K562 (cell line): ENCODE measurements at regions of chr7 and their contacts with region 1.

Region 1: DNA sequence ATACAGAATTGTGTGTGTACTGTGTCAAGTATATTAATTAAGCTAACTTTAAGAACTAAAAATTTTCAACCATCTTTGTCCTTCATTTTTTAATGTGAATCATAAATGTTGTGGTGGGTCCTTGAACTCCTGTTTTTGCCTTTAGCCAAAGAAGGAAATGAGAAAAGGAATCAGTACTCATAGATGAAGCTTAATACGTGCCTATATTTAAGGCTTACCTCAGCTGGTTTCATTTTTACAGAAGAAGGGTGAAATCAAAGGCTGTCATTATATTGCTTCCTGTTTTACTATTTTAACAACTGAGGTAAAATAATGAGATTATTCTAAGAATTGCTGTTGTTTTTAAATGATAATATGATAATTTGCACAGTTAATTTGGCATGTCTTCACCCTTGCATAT is 6.3 kb upstream of the SNX13 start:
- DNase-seq: no peak
- ATAC-seq: no peak
- H3K4me3 ChIP-seq: no peak overlapping the region
- H3K27ac ChIP-seq: no peak overlapping the region
- H3K4me1 ChIP-seq: no peaks in the 10 kb centered on the region
- H3K27me3 ChIP-seq: no peaks in the 10 kb centered on the region
- CTCF ChIP-seq: no peak
- EP300 ChIP-seq: no peak
- POLR2A ChIP-seq: no peak
- RAD21 ChIP-seq: no peak

Region 2: DNA sequence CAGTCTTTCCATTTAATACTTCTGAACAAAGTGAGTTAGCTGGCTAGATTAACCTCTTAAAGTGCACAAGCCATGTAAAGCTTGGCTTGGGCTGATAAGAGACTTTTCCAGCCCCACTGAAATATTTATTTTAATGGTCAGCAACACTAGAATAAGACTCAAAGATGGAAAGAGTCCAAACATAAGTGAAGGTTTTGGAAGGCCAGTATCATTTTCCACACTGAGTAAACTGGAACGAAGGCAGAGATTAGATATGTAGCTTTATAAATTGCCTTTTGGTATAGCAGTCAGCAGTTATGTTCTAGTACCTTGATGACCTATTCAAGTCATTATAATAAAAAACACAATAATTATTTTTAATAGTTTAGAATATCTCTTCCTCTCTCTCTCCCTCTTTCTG is 651.2 kb after region 1 on chr7:
- CTCF ChIA-PET with region 1: no interaction called
- POLR2A ChIA-PET with region 1: no interaction called
- in situ Hi-C with region 1: no loop called
- intact Hi-C with region 1: loop called (anchors 5 kb)
- DNase-seq: no peak
- ATAC-seq: no peak
- H3K4me3 ChIP-seq: no peak overlapping the region
- H3K27ac ChIP-seq: no peak overlapping the region
- H3K4me1 ChIP-seq: no peaks in the 10 kb centered on the region
- H3K27me3 ChIP-seq: no peaks in the 10 kb centered on the region
- CTCF ChIP-seq: no peak
- EP300 ChIP-seq: no peak
- POLR2A ChIP-seq: no peak
- RAD21 ChIP-seq: no peak